H1 (cell line): ENCODE measurements at regions of chr11 and their contacts with region 1.

Region 1: DNA sequence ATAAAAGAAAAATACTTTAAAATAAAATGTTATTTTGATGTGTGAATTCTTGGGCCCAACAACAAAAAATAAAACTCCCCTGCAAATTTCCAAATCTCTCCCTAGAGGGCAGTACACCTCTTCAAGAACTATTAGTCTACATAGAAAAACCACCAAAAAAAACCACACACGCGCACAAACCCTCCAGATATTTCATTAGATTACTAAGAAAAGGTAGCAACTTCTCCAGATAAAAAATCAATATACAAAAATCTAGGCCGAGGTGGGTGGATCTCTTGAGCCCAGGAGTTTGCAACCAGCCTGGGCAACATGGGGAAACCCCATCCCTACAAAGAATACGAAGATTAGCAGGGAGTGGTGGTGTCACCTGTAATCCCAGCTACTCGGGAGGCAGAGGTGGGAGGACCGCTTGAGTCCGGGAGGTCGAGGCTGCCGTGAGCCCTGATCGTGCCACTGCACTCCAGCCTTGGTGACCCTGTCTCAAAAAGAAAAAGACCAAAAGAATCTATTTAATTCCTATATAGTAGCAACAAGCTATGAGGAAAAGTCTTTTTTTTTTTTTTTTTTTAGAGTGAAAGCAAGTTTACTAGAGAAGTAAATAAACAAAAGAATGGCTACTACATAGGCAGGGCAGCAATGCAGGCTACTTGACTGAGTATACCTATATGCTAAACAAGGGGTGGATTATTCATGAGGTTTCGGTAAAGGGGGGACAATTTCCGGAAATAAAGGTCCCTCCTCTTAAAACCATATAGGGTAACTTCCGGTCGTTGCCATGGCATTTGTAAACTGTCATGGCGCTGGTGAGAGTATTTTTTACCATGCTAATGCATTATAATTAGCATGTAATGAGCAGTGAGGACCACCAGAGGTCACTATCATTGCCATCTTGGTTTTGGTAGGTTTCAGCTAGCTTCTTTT is 13.1 kb downstream of the B3GNT6 start:
- DNase-seq: peak in 1 of 2 experiments; percentile 64
- H3K4me3 ChIP-seq: peak overlapping the region in 1 of 4 experiments; percentile 34; a peak in 1 of 8 replicates
- H3K27ac ChIP-seq: no peak overlapping the region
- H3K4me1 ChIP-seq: peaks cover 0 to 4% (median 0%) of the 10 kb centered on the region in 4 experiments; a peak in 3 of 7 replicates
- H3K27me3 ChIP-seq: peaks cover 0 to 5% (median under 1%) of the 10 kb centered on the region in 4 experiments; a peak in 2 of 7 replicates
- CTCF ChIP-seq: peak in 2 of 3 experiments; percentile 55 to 60; a peak in 3 of 4 replicates
- EP300 ChIP-seq: no peak
- POLR2A ChIP-seq: no peak
- RAD21 ChIP-seq: peak; percentile 49 to 54

Region 2: GRCh38 chr11:76734456-76735420 is 312.5 kb before region 1 on chr11:
- CTCF ChIA-PET with region 1: interaction called, 14 read pairs
- POLR2A ChIA-PET with region 1: no interaction called
- DNase-seq: no peak
- H3K4me3 ChIP-seq: no peak overlapping the region
- H3K27ac ChIP-seq: no peak overlapping the region
- H3K4me1 ChIP-seq: peaks cover 8 to 17% (median 13%) of the 10 kb centered on the region in 4 experiments
- H3K27me3 ChIP-seq: no peaks in the 10 kb centered on the region
- CTCF ChIP-seq: no peak
- EP300 ChIP-seq: no peak
- POLR2A ChIP-seq: no peak
- RAD21 ChIP-seq: no peak

Region 3: DNA sequence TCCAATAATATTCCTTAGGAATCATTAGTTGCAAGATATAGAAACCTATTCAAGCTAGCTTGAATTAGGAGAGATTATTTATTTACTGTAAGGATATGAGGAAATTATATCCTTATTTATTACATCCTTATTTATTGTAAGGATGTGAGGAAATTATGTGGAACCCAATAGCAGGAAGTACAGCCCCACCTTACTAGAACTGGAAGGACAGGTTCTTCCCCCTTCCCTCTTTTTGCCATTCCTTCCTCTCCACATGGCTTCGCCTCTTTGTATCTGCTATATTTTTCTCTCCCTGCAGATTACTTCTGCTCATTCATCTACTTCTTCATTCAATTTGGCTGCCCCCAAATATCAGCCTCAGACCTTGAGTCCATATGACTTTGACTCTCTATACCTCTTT is 62.5 kb before region 1 on chr11:
- CTCF ChIA-PET with region 1: no interaction called
- POLR2A ChIA-PET with region 1: no interaction called
- DNase-seq: no peak
- H3K4me3 ChIP-seq: no peak overlapping the region
- H3K27ac ChIP-seq: no peak overlapping the region
- H3K4me1 ChIP-seq: no peaks in the 10 kb centered on the region
- H3K27me3 ChIP-seq: no peaks in the 10 kb centered on the region
- CTCF ChIP-seq: no peak
- EP300 ChIP-seq: no peak
- POLR2A ChIP-seq: no peak
- RAD21 ChIP-seq: no peak

Region 4: DNA sequence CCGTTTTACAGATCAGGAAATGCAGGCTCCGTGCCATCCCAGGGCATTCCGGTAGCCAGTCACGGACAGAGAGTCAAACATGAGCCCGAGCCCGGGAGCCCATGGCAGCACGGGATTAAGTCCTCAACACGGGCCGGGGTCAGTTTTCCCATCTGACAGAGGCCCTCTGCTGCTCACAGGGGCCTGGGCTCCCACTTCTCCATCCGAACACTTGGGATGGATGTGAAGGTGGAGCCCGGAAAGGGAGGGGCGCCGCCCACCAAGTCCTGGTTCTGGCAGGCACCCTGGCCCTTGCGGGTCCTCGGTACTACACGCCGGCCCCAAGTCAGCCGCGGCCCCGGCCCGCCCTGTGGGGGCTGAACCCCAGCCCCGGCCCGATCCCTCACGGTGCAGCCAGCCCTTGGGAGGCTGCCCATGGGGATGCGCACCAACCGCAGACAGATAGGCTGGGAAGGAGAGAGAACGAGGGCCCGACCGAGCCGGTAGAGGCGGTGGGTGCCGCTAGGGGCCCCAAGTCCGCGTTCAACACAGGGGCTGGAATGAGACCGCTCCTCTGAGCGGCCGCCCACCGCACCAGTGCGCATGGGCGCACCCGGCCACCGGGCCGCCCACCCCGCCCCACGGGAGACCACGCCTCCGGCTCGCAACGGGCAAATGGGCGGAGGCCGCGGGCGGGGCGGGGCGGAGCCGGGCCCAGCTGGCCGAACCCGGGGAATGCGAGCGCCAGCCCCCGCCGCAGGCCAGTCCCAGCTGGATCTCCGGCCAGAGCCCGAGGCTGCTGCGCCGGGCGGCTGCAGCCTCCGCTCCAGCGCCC is 19.2 kb after region 1 on chr11 and contains the start of gene CAPN5:
- CTCF ChIA-PET with region 1: interaction called, 43 read pairs
- POLR2A ChIA-PET with region 1: interaction called, 3 read pairs
- DNase-seq: peak; percentile 84 to 96
- H3K4me3 ChIP-seq: peak within 1 kb of the TSS; percentile 58 to 89 (median 66)
- H3K27ac ChIP-seq: peak within 1 kb of the TSS; percentile 50; the same call in 1 of the 2 replicates
- H3K4me1 ChIP-seq: peaks cover 0 to 7% (median under 1%) of the 10 kb centered on the region in 4 experiments; a peak in 5 of 7 replicates
- H3K27me3 ChIP-seq: peaks cover 0 to 3% (median 0%) of the 10 kb centered on the region in 4 experiments; a peak in 3 of 7 replicates
- CTCF ChIP-seq: peak; percentile 49 to 57 (median 51)
- EP300 ChIP-seq: peak in 1 of 2 experiments; percentile 27; a peak in 1 of 3 replicates
- POLR2A ChIP-seq: peak in 1 of 2 experiments; percentile 88; a peak in 2 of 3 replicates
- RAD21 ChIP-seq: peak; percentile 31 to 40; a peak in 2 of 4 replicates
- total RNA-seq, gene CAPN5: 22.4 and 22.6 TPM in 2 replicates

Region 5: GRCh38 chr11:77091146-77091940 is 44.1 kb after region 1 on chr11:
- CTCF ChIA-PET with region 1: interaction called, 201 read pairs
- POLR2A ChIA-PET with region 1: interaction called, 9 read pairs
- DNase-seq: peak; percentile 73 to 97
- H3K4me3 ChIP-seq: no peak overlapping the region
- H3K27ac ChIP-seq: no peak overlapping the region
- H3K4me1 ChIP-seq: peaks cover 0 to 8% (median 2%) of the 10 kb centered on the region in 4 experiments; a peak in 3 of 7 replicates
- H3K27me3 ChIP-seq: no peaks in the 10 kb centered on the region
- CTCF ChIP-seq: peak; percentile 96 to 100 (median 100)
- EP300 ChIP-seq: no peak
- POLR2A ChIP-seq: no peak
- RAD21 ChIP-seq: peak; percentile 92 to 93

Region 6: DNA sequence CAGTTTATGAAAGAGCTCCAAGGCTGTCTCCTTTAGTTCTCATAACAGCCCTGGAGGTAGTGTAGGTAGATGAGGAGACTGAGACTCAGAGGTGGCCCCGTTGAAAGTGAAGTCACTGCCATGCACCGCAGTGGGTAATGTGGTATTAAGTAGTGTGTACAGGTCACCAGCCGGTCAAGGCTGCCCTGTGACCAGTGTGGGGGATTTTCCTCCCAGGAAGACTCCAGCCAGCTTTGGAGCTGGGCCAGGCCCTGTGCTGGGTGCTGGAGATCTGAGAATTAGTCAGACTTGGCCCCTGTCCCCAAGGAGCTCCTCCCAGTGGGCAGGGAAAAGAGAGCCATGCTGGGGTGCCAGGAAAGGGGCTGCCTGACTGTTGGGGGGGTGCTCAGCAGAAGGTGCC is 60.7 kb after region 1 on chr11:
- CTCF ChIA-PET with region 1: interaction called, 20 read pairs
- POLR2A ChIA-PET with region 1: no interaction called
- DNase-seq: no peak
- H3K4me3 ChIP-seq: no peak overlapping the region
- H3K27ac ChIP-seq: no peak overlapping the region
- H3K4me1 ChIP-seq: peaks cover 0 to under 1% (median 0%) of the 10 kb centered on the region in 4 experiments; a peak in 1 of 7 replicates
- H3K27me3 ChIP-seq: no peaks in the 10 kb centered on the region
- CTCF ChIP-seq: no peak
- EP300 ChIP-seq: no peak
- POLR2A ChIP-seq: no peak
- RAD21 ChIP-seq: no peak